Left ventricle myocardium inferior (tissue), 1 donor: ENCODE measurements at regions of chr17 and their contacts with region 1.

Region 1: DNA sequence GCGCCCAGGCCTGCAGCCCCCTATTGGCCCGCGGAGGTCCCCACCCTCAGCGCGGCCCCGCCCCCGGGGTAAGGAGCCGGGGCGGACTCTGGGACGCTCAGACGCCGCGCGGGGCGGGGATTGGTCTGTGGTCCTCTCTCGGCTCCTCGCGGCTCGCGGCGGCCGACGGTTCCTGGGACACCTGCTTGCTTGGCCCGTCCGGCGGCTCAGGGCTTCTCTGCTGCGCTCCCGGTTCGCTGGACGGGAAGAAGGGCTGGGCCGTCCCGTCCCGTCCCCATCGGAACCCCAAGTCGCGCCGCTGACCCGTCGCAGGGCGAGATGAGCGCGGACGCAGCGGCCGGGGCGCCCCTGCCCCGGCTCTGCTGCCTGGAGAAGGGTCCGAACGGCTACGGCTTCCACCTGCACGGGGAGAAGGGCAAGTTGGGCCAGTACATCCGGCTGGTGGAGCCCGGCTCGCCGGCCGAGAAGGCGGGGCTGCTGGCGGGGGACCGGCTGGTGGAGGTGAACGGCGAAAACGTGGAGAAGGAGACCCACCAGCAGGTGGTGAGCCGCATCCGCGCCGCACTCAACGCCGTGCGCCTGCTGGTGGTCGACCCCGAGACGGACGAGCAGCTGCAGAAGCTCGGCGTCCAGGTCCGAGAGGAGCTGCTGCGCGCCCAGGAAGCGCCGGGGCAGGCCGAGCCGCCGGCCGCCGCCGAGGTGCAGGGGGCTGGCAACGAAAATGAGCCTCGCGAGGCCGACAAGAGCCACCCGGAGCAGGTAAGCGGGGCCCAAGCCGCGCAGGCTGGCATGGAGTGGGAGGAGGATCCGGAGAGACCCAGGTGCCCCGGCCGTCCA is at the start of gene NHERF1:
- DNase-seq: peak; percentile 96
- H3K4me3 ChIP-seq: peak within 1 kb of the TSS; percentile 87
- H3K27ac ChIP-seq: peak within 1 kb of the TSS; percentile 87
- H3K4me1 ChIP-seq: peaks cover 84% of the 10 kb centered on the region
- H3K27me3 ChIP-seq: no peaks in the 10 kb centered on the region
- CTCF ChIP-seq: peak; percentile 39
- total RNA-seq, gene NHERF1: 11.3 TPM

Region 2: GRCh38 chr17:74776044-74776977 is 27.6 kb after region 1 on chr17 and contains the start of gene NAT9:
- intact Hi-C with region 1: loop called (anchors 2 kb)
- DNase-seq: peak; percentile 98
- H3K4me3 ChIP-seq: peak within 1 kb of the TSS; percentile 84
- H3K27ac ChIP-seq: peak within 1 kb of the TSS; percentile 78
- H3K4me1 ChIP-seq: peaks cover 36% of the 10 kb centered on the region
- H3K27me3 ChIP-seq: no peaks in the 10 kb centered on the region
- CTCF ChIP-seq: no peak
- total RNA-seq, gene NAT9: 18.6 TPM